Aorta (tissue), 5 donors: ENCODE measurements at regions of chr22 and their contacts with region 1.

Region 1: GRCh38 chr22:29172216-29172615 is 33.5 kb upstream of the EMID1 start:
- DNase-seq: no peak
- ATAC-seq: no peak
- H3K4me3 ChIP-seq: no peak overlapping the region
- H3K27ac ChIP-seq: no peak overlapping the region
- H3K4me1 ChIP-seq: no peaks in the 10 kb centered on the region
- H3K27me3 ChIP-seq: no peaks in the 10 kb centered on the region

Region 2: DNA sequence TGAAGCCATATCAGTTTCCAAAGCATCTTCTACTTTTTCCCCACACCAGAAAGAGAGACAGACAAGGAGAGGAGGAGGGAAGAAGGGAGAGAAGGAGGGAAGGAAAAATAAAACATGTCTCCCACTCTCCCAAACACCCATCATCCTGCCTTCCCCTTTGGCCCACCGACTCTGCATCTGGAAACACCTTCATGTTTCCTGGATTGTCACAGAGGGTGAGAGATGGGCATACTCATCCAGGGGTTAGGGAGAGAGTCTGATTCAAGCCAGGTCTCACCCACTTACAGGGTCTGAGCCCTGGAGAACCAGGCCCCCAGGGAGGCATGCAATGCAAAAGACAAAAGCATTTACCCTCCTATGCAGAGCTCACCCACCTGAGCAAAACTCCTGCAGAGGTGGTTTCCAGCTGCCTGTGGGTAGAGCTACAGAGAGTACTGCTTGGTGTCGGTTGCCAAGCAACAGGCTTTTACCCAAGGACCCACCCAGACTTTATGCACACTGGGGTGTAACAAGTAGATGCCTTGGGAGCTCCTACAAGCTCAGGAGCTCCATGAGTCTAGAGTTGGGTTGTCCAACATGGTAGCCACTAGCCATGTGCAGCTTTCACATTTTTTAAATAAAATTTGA is 1404.1 kb before region 1 on chr22:
- intact Hi-C with region 1: loop called in 1 of 2 experiments (anchors 10 kb)
- DNase-seq: no peak
- ATAC-seq: no peak
- H3K4me3 ChIP-seq: no peak overlapping the region
- H3K27ac ChIP-seq: no peak overlapping the region
- H3K4me1 ChIP-seq: peaks cover 0 to 2% of the 10 kb centered on the region in 2 donors
- H3K27me3 ChIP-seq: no peaks in the 10 kb centered on the region